MCF 10A (cell line): ENCODE measurements at regions of chr16 and their contacts with region 1.

Region 1: DNA sequence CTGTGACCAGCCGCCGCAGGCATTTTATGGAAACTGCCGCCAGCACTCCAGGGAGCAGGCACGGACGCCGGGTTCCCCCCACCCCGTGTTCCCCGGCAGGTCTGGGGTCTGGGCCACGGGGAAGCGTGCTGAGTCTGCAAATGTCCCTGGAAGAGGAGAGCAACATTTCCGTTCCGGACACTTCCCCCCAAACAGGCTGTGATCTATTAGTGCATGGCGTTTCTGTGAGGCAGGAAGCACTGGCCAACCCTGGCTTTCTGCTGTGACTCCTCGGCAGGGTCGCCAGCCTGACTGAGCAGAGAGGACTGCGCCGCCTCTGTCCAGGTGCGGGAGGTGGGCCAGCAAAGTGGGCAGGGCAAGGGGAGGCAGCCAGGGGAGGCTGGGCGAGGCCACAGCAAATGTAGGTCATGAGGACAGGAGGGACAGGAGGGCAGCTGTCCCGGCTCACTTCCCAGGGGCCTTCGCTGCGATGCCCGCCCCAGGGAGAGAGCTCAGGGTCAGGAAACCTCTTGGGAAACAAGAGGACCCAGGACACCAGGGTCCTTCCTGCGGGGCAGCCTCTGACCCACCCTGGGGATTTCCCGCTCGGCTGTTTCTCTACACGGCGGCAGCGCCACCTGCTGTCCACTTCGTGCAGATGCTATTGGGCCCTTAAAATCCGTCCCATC is 9.5 kb downstream of the FOXF1 start:
- DNase-seq: peak; percentile 50
- H3K4me3 Mint-ChIP-seq: no peak overlapping the region
- H3K27ac Mint-ChIP-seq: no peak overlapping the region
- H3K4me1 Mint-ChIP-seq: no peaks in the 10 kb centered on the region
- H3K27me3 Mint-ChIP-seq: peaks cover 43% of the 10 kb centered on the region
- CTCF ChIP-seq: peak; percentile 83

Region 2: DNA sequence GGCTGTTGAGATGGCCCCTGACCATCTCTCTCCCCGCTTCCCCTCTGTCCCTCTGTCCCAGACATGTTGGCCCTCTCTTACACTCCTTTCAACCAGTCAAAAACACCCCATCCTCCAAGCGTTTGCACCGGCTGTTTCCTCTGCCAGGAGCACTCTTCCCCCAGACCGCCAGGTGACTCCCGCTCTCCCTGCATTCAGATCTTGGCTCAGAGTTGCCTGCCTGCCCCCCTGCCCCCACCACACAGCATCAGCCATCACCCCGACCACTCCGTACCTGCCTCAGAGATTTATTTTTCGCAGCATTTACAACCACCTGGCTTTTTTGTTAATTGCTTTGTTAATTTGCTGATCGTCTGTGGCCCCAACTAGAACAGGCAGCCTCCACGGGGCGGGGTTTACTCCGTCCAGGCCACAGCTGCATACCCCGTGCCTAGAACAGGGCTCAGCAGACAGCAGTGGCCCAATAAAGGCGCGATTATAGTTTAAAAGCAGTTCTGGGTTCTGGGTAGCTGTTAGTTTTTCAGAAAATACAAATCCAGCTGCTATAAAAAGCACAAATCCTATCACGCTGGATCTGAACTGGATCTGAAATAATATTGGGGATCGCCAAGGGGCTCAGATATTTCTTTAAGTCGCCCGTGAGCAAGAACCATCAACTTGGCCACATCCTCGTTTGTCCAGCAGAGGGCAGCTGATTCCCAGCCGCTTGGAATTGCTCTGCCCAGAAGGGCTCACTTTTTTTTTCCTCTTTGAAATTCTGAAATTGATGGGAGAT is 447.3 kb before region 1 on chr16:
- CTCF ChIA-PET with region 1: interaction called, 249 read pairs
- POLR2A ChIA-PET with region 1: interaction called, 4 read pairs
- intact Hi-C with region 1: loop called (anchors 1 kb)
- DNase-seq: peak; percentile 66
- H3K4me3 Mint-ChIP-seq: no peak overlapping the region
- H3K27ac Mint-ChIP-seq: no peak overlapping the region
- H3K4me1 Mint-ChIP-seq: no peaks in the 10 kb centered on the region
- H3K27me3 Mint-ChIP-seq: peaks cover 90% of the 10 kb centered on the region
- CTCF ChIP-seq: peak; percentile 80

Region 3: DNA sequence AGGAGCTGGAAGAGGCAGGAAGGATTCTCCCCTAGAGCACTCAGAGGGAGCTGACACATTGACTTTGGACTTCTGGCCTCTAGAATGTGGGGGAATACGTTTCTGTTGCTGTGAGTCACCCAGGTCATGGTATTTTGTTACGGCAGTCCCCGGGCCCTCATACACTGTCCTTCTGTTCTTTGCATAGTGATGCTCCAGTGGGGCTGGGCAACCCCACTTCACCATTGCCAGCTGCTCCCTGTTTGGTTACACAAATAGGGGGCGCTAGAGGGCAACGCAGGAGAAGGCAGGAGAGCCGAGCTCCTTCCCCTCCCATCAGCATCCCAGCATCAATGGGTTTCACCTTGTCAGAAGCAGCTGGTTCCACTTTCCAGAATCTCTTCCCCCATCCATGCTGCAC is 267.2 kb before region 1 on chr16:
- CTCF ChIA-PET with region 1: no interaction called
- POLR2A ChIA-PET with region 1: no interaction called
- intact Hi-C with region 1: loop called (anchors 10 kb)
- DNase-seq: peak; percentile 66
- H3K4me3 Mint-ChIP-seq: no peak overlapping the region
- H3K27ac Mint-ChIP-seq: no peak overlapping the region
- H3K4me1 Mint-ChIP-seq: no peaks in the 10 kb centered on the region
- H3K27me3 Mint-ChIP-seq: peaks cover 92% of the 10 kb centered on the region
- CTCF ChIP-seq: peak; percentile 54

Region 4: GRCh38 chr16:86343027-86343787 is 176.6 kb before region 1 on chr16:
- CTCF ChIA-PET with region 1: interaction called, 36 read pairs
- POLR2A ChIA-PET with region 1: no interaction called
- intact Hi-C with region 1: loop called (anchors 2 kb)
- DNase-seq: peak; percentile 35
- H3K4me3 Mint-ChIP-seq: peak overlapping the region; percentile 61
- H3K27ac Mint-ChIP-seq: no peak overlapping the region
- H3K4me1 Mint-ChIP-seq: peaks cover 17% of the 10 kb centered on the region
- H3K27me3 Mint-ChIP-seq: peaks cover 20% of the 10 kb centered on the region
- CTCF ChIP-seq: no peak

Region 5: GRCh38 chr16:86531191-86531545 is 11.4 kb after region 1 on chr16:
- CTCF ChIA-PET with region 1: interaction called, 21 read pairs
- POLR2A ChIA-PET with region 1: interaction called, 3 read pairs
- intact Hi-C with region 1: no loop called
- DNase-seq: no peak
- H3K4me3 Mint-ChIP-seq: no peak overlapping the region
- H3K27ac Mint-ChIP-seq: no peak overlapping the region
- H3K4me1 Mint-ChIP-seq: no peaks in the 10 kb centered on the region
- H3K27me3 Mint-ChIP-seq: peaks cover 8% of the 10 kb centered on the region
- CTCF ChIP-seq: no peak

Region 6: DNA sequence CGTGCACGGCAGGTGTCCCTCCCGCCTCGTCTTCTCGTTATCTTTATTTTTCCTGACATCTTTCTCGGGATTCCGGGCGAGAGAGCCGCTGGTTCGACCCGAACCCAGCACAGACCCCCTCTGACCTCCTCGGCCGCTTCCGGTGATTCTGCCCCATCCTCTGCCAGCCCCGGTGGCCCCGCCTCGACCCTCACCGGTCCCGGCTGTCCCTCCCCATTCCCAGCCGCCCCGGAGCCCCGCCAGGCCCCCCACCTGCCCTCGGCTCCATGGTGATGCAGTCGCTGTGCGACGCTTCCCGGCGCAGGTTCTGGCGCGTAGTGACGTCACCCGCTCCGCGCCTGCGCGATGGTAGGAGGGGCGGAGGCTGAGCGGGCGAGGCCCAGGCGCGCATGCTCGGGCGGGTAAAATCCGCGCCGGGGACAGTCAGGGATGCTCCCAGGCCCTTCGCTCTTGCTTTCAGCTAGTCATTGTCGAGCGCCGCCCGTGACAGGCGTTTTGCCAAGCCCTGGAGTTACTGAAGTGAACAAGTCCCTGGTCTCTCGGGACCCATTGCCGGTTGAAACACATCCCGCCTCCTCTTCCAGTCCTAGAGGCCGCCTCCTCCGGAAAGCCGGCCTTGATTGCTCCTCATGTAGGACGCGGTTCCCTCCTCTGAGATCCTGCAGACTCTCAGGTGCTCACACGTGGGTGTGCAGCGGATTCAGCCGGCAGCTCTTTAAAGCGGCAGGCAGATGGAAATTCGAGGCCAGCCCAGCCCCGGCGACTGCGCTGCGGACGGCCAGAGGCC is 35.3 kb after region 1 on chr16 and contains the start of gene MTHFSD:
- CTCF ChIA-PET with region 1: no interaction called
- POLR2A ChIA-PET with region 1: no interaction called
- intact Hi-C with region 1: no loop called
- DNase-seq: peak; percentile 87
- H3K4me3 Mint-ChIP-seq: peak within 1 kb of the TSS; percentile 95
- H3K27ac Mint-ChIP-seq: peak within 1 kb of the TSS; percentile 99
- H3K4me1 Mint-ChIP-seq: no peaks in the 10 kb centered on the region
- H3K27me3 Mint-ChIP-seq: no peaks in the 10 kb centered on the region
- CTCF ChIP-seq: no peak
- total RNA-seq, gene MTHFSD: 30.7 and 39.1 TPM in 2 replicates